ENCODE measurements at regions of chr3 and their contacts with region 1.

Region 1: DNA sequence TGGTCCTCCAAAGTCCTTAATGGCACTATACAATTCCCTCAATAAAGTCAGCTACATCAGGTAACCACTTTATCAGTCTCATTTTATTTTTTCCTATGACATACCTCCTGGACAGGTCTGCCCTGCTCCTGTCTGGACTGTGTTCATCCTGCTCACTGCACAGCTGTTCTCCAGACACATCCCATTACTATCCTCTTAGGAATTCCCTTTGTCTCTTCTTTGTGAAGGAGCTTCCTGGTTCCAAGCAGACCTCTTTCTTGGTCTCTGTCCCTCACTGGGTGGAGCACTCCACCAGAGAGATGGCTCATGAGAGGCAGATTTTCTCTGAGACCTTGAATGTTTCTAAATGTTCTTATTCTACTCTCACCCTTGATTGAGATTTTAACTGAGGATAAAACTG is 60.1 kb downstream of the KY start:
- DNase-seq: no peak
- H3K4me3 Mint-ChIP-seq: no peak overlapping the region
- H3K27ac Mint-ChIP-seq: no peak overlapping the region
- H3K4me1 Mint-ChIP-seq: no peaks in the 10 kb centered on the region
- H3K27me3 Mint-ChIP-seq: peaks cover 8% of the 10 kb centered on the region

Region 2: GRCh38 chr3:134567605-134568004 is 23.2 kb before region 1 on chr3:
- CTCF ChIA-PET with region 1: no interaction called
- POLR2A ChIA-PET with region 1: no interaction called
- DNase-seq: no peak
- H3K4me3 Mint-ChIP-seq: no peak overlapping the region
- H3K27ac Mint-ChIP-seq: no peak overlapping the region
- H3K4me1 Mint-ChIP-seq: no peaks in the 10 kb centered on the region
- H3K27me3 Mint-ChIP-seq: no peaks in the 10 kb centered on the region

Region 3: GRCh38 chr3:134600685-134601463 is 10.1 kb after region 1 on chr3:
- CTCF ChIA-PET with region 1: interaction called, 11 read pairs
- POLR2A ChIA-PET with region 1: no interaction called
- DNase-seq: peak; percentile 65
- H3K4me3 Mint-ChIP-seq: no peak overlapping the region
- H3K27ac Mint-ChIP-seq: no peak overlapping the region
- H3K4me1 Mint-ChIP-seq: peaks cover 10% of the 10 kb centered on the region
- H3K27me3 Mint-ChIP-seq: peaks cover 2% of the 10 kb centered on the region